Activated CD4-positive, alpha-beta T cell treated with anti-CD3 and anti-CD28 coated beads, Interleukin-2, amount 10 ng/mL, durations not matched to agents 7 days and 5 days (primary cell): ENCODE measurements at regions of chr2 and their contacts with region 1.

Region 1: DNA sequence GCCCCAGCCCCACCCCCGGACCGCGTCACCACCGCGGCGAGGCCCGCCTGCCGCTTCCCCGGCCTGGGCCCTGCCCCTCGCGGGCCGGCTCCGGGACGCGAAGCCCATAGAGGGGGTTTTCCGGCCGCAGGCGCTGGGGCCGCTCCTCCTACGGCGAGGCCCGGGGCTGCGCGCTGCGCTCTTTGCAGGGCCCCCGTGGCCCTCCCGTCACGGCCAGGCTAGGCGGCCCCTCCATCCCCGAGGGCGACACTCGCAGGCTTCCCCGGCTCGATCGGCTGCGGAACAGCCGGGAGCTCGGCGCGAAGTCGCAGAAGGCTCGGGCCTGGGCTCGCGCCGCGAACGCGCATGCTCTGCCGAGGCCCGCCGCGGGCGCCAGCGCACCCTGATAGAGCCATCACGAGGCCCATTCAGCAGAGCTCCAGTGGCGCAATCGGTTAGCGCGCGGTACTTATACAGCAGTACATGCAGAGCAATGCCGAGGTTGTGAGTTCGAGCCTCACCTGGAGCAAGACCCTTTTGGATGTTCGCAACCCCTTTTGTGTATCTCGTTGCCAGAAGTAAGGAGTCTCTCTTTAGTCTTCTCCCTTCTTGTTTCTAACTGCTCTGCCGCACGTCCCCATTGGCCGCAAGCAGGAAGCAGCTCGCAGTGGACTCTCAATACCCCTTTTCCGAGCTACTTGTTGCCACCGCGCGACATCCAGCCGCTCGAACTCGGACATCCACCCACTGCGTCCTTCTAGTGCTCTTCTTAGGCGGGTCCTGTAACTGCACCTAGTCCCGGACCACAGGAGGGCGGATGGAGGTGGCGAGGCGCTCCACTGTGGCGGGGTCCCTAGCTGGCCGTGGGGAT is 18.0 kb upstream of the HAAO start:
- DNase-seq: peak; percentile 95
- H3K4me3 Mint-ChIP-seq: peak overlapping the region; percentile 90
- H3K27ac Mint-ChIP-seq: peak overlapping the region; percentile 99
- H3K4me1 Mint-ChIP-seq: peaks cover 25% of the 10 kb centered on the region
- H3K27me3 Mint-ChIP-seq: peaks cover 6% of the 10 kb centered on the region

Region 2: GRCh38 chr2:42693013-42693615 is 117.2 kb before region 1 on chr2:
- CTCF ChIA-PET with region 1: interaction called, 8 read pairs
- POLR2A ChIA-PET with region 1: interaction called, 11 read pairs
- DNase-seq: peak; percentile 26
- H3K4me3 Mint-ChIP-seq: no peak overlapping the region
- H3K27ac Mint-ChIP-seq: peak overlapping the region; percentile 84
- H3K4me1 Mint-ChIP-seq: peaks cover 28% of the 10 kb centered on the region
- H3K27me3 Mint-ChIP-seq: no peaks in the 10 kb centered on the region

Region 3: GRCh38 chr2:42823744-42824453 is 13.6 kb after region 1 on chr2:
- CTCF ChIA-PET with region 1: interaction called, 11 read pairs
- POLR2A ChIA-PET with region 1: no interaction called
- DNase-seq: no peak
- H3K4me3 Mint-ChIP-seq: no peak overlapping the region
- H3K27ac Mint-ChIP-seq: no peak overlapping the region
- H3K4me1 Mint-ChIP-seq: peaks cover 16% of the 10 kb centered on the region
- H3K27me3 Mint-ChIP-seq: peaks cover 10% of the 10 kb centered on the region